Activated B cell treated with CpG ODN at 0.5 μM for 24 hours (primary cell): ENCODE measurements at regions of chr17 and their contacts with region 1.

Region 1: DNA sequence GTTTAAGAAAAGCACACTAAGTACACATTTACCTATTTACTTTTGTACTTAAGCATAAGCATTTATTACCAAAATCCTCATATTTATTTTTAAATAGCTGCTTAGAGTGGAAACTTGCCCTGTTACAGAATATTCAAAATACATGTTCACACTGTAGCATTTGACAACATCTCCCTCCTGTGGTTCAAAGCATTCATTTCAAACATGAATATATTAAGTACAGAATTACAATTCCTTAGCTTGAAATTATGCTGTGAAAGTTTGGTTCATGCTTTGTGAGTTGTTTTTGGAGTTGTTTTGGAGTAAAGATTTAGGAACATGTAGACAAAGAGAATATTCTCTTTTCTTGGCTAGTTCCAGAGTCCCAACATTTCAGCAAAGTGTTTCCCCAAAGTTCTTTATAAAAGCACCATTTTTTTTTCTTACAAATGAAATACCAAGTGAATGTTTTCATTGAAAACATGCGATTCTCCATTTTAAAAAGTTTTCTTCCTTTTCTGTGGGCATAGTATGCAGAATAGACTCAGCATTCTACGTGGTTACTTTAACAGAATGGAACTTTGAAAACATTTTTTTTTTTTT is 33.2 kb downstream of the TUBD1 start:
- DNase-seq: no peak
- ATAC-seq: peak; percentile 71
- H3K4me3 Mint-ChIP-seq: no peak overlapping the region
- H3K27ac Mint-ChIP-seq: peak overlapping the region; percentile 56
- H3K4me1 Mint-ChIP-seq: peaks cover 7% of the 10 kb centered on the region
- H3K27me3 Mint-ChIP-seq: no peaks in the 10 kb centered on the region
- CTCF ChIP-seq: peak; percentile 36

Region 2: DNA sequence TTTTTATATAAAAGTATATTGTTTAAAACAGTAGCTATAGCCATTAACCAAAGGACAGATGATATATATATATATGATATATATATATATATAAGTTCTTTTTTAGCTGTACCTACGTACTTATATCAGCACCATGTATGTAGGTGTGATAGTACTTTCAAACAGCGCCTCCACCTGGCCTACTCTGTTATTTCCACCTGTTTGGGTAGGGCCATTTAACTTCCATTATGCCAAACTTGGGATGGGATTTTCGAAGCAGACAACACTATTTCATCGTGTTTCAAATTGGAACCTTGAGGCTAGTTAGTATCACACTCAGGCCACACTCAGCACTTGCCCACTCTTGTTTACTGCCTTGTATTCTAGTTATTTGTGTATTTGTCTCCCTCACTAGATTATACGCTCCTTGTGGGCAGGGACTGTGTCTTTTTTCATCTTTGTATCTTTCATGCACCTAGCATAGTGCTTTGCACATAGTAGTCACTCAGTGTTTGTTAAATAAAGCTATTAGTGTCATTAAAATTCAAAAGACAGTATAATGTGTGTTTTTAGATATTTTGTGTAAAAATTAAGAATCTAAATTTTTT is 251.6 kb before region 1 on chr17:
- CTCF ChIA-PET with region 1: no interaction called
- POLR2A ChIA-PET with region 1: no interaction called
- intact Hi-C with region 1: no loop called
- DNase-seq: no peak
- ATAC-seq: no peak
- H3K4me3 Mint-ChIP-seq: no peak overlapping the region
- H3K27ac Mint-ChIP-seq: no peak overlapping the region
- H3K4me1 Mint-ChIP-seq: no peaks in the 10 kb centered on the region
- H3K27me3 Mint-ChIP-seq: no peaks in the 10 kb centered on the region
- CTCF ChIP-seq: no peak

Region 3: DNA sequence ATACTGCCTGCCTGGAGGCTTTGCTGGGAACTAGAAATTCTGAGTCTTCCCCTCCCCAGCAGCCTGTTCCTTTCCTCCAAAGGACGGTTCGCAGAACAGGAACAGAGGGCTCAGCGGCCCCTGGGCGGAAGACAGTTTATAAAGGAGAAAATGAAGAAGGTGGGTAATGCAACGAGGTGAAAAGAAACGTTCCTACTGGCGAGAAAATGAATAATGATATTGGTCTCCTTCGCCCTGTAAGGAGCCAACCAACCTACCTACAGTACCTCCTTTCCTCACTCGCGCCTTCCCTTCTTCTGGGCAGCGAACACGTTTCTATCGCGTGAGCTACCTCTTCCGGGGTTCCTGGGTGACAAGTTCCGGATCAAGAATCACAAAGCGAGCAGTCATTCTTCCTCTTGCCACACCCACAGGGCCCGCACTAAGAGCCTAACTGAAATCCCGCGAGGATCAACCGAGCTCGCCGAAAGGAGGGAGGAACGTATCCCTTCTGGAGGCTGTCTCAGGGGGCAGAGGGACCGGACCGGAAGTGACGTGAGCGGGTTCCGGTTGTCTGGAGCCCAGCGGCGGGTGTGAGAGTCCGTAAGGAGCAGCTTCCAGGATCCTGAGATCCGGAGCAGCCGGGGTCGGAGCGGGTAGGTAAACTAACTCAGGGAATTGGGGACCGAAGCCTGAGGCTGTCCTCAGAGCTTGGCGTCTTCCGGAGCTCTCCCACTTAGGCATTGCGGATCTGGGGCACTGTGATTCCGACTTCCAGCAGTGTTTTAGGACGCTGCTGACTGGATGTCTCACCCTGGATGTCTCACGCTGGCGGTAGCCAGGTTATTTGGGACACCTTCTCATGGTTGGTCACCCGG is 152.2 kb before region 1 on chr17 and contains the starts of genes PTRH2 and VMP1:
- CTCF ChIA-PET with region 1: interaction called, 4 read pairs
- POLR2A ChIA-PET with region 1: no interaction called
- intact Hi-C with region 1: loop called (anchors 1 kb)
- DNase-seq: peak; percentile 79
- ATAC-seq: peak; percentile 95
- H3K4me3 Mint-ChIP-seq: peak within 1 kb of the TSS; percentile 99
- H3K27ac Mint-ChIP-seq: peak within 1 kb of the TSS; percentile 97
- H3K4me1 Mint-ChIP-seq: peaks cover 72% of the 10 kb centered on the region
- H3K27me3 Mint-ChIP-seq: no peaks in the 10 kb centered on the region
- CTCF ChIP-seq: no peak
- total RNA-seq, gene PTRH2: 27.0 and 29.9 TPM in 2 replicates
- total RNA-seq, gene VMP1: 158 and 176 TPM in 2 replicates

Region 4: DNA sequence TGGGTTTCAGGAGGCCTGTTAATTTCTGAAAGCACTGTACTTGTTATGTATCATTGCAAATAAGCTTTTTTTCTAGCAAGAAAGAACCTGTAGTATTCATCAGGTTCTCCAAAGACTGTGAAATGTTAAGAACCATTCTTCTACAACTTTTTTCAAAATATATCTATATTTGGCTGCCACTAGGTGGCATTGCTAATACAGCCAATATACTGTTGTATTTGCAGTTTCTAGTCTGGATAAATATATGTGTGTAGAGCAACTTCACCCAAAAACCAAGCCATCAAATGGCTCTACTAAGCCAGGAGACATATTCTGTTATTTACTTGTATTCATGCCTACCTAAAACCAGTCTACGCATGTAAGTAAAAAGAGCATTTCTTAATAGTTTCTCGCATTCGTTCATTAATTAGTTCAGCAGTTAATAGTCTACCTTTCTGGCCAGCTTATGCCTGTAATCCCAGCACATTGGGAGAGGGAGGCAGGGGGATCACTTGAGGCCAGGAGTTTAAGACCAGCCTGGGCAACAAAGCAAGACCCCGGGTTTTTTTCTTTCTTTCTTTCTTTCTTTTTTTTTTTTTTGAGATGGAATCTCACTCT is 112.6 kb before region 1 on chr17:
- CTCF ChIA-PET with region 1: interaction called, 3 read pairs
- POLR2A ChIA-PET with region 1: interaction called, 6 read pairs
- intact Hi-C with region 1: loop called (anchors 1 kb)
- DNase-seq: no peak
- ATAC-seq: peak; percentile 62
- H3K4me3 Mint-ChIP-seq: no peak overlapping the region
- H3K27ac Mint-ChIP-seq: no peak overlapping the region
- H3K4me1 Mint-ChIP-seq: peaks cover 6% of the 10 kb centered on the region
- H3K27me3 Mint-ChIP-seq: no peaks in the 10 kb centered on the region
- CTCF ChIP-seq: no peak

Region 5: DNA sequence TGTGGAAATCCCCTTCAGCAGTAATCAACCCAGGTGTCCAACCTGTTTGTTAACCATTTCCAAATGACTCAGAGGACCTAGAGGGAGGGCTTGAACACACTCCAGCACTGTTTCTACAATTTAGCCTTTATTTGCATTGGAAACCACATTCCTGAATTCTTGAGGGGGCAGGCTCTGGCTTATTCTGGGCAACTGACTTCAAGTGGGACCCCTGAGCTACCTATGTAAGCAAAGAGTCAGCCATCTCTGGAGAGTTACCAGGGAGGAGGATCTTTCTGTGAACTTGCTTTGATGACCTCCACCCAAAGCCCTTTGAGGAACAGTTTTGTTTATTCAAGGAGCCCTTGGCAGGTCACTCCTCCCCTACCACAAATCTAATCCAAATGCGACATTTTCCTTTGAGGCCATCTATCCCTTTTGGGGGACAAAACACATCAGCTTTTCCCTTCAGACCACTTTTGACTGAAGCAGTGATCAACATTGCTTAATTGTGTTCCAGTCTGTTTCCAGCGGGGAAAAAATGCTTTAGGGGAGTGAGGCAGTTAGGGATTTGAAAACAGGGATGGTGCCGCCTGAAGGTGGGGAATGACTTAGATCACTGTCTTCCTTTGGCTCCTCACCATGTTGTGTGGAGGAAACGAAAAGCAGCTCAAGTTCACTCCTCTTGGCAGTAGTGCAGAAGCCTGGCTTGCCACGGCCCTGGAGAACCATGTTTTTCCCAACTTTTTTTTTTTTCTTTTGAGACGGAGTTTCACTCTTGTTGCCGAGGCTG is 13.0 kb before region 1 on chr17:
- CTCF ChIA-PET with region 1: interaction called, 32 read pairs
- POLR2A ChIA-PET with region 1: no interaction called
- intact Hi-C with region 1: loop called (anchors 2 kb)
- DNase-seq: peak; percentile 33
- ATAC-seq: peak; percentile 67
- H3K4me3 Mint-ChIP-seq: peak overlapping the region; percentile 50
- H3K27ac Mint-ChIP-seq: peak overlapping the region; percentile 92
- H3K4me1 Mint-ChIP-seq: peaks cover 75% of the 10 kb centered on the region
- H3K27me3 Mint-ChIP-seq: no peaks in the 10 kb centered on the region
- CTCF ChIP-seq: no peak

Region 6: GRCh38 chr17:59870482-59870881 is 10.9 kb after region 1 on chr17:
- CTCF ChIA-PET with region 1: no interaction called
- POLR2A ChIA-PET with region 1: interaction called, 17 read pairs
- intact Hi-C with region 1: no loop called
- DNase-seq: no peak
- ATAC-seq: no peak
- H3K4me3 Mint-ChIP-seq: no peak overlapping the region
- H3K27ac Mint-ChIP-seq: no peak overlapping the region
- H3K4me1 Mint-ChIP-seq: no peaks in the 10 kb centered on the region
- H3K27me3 Mint-ChIP-seq: no peaks in the 10 kb centered on the region
- CTCF ChIP-seq: no peak

Region 7: DNA sequence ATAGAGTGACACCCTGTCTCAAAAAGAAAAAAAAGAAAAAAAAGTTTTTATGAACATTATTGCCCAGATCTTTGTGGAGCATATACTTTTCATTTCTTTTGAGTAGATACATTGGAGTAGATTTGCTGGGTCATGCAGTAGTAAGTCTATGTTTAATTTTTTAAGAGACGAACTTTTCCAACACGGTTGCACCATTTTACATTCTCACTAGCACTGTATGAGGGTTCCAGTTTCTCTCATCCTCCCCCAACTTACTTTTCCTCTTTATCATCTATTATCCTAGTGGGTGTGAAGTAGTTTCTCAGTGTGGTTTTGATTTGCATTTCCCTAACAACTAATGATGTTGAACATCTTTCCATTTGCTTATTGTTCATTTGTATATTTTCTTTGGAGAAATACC is 43.9 kb after region 1 on chr17:
- CTCF ChIA-PET with region 1: no interaction called
- POLR2A ChIA-PET with region 1: no interaction called
- intact Hi-C with region 1: no loop called
- DNase-seq: no peak
- ATAC-seq: no peak
- H3K4me3 Mint-ChIP-seq: no peak overlapping the region
- H3K27ac Mint-ChIP-seq: no peak overlapping the region
- H3K4me1 Mint-ChIP-seq: peaks cover 22% of the 10 kb centered on the region
- H3K27me3 Mint-ChIP-seq: no peaks in the 10 kb centered on the region
- CTCF ChIP-seq: no peak

Region 8: GRCh38 chr17:60006124-60006523 is 146.6 kb after region 1 on chr17:
- CTCF ChIA-PET with region 1: no interaction called
- POLR2A ChIA-PET with region 1: no interaction called
- intact Hi-C with region 1: no loop called
- DNase-seq: no peak
- ATAC-seq: no peak
- H3K4me3 Mint-ChIP-seq: no peak overlapping the region
- H3K27ac Mint-ChIP-seq: no peak overlapping the region
- H3K4me1 Mint-ChIP-seq: no peaks in the 10 kb centered on the region
- H3K27me3 Mint-ChIP-seq: no peaks in the 10 kb centered on the region
- CTCF ChIP-seq: no peak